ENCODE measurements at regions of chr14 and their contacts with region 1.

Region 1: GRCh38 chr14:35365130-35366055 is 39.2 kb downstream of the NFKBIA start:
- DNase-seq: peak in 1 of 10 donors; percentile 46
- ATAC-seq: peak in 1 of 2 donors; percentile 29
- H3K4me3 Mint-ChIP-seq: peak overlapping the region in 5 of 10 donors; percentile 18 to 47 (median 26)
- H3K27ac Mint-ChIP-seq: peak overlapping the region in 9 of 10 donors; percentile 21 to 95 (median 60)
- H3K4me1 Mint-ChIP-seq: peaks cover 19 to 51% (median 45%) of the 10 kb centered on the region in 4 donors
- H3K27me3 Mint-ChIP-seq: no peaks in the 10 kb centered on the region

Region 2: GRCh38 chr14:35277179-35277578 is 88.2 kb before region 1 on chr14:
- POLR2A ChIA-PET with region 1: no interaction called
- DNase-seq: no peak
- ATAC-seq: no peak
- H3K4me3 Mint-ChIP-seq: no peak overlapping the region
- H3K27ac Mint-ChIP-seq: peak overlapping the region in 1 of 10 donors; percentile 61
- H3K4me1 Mint-ChIP-seq: peaks cover 0 to 3% (median 0%) of the 10 kb centered on the region in 4 donors
- H3K27me3 Mint-ChIP-seq: no peaks in the 10 kb centered on the region

Region 3: DNA sequence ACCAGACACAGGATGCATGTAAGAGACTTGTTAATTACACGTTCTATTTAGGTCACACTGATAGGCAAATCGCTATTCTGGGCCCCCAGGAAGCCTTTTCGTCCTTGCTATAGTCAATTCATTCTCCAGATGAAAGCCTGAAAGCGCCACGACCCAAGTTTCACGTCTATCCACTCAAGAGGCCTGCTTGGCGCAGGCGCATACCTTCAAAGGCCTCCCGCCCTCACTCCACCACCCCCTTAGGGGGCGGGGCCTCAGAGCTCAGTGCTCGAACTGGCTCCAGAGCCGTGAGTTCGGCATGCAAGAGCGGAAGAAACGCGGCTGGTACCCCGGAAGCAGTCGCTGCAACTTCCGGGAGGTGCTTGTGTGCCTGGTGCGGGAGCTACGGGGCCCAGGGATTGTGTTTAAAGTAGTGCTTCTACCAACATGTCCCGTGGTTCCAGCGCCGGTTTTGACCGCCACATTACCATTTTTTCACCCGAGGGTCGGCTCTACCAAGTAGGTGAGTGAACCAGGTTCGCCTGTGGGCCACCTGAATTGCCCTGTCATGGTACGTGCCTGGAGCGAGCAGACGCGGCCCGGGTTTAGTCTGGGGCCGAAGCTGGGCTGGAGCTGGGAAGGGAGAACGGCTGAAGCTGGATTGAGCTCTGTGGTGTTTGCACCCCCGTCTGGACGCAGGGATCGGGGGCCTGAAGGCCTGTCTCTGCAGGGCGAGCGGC is 73.2 kb before region 1 on chr14 and contains the start of gene PSMA6:
- POLR2A ChIA-PET with region 1: interaction called, 37 read pairs
- DNase-seq: peak; percentile 94 to 100 (median 99)
- ATAC-seq: peak; percentile 93 to 94
- H3K4me3 Mint-ChIP-seq: peak within 1 kb of the TSS; percentile 95 to 98 (median 98)
- H3K27ac Mint-ChIP-seq: peak within 1 kb of the TSS; percentile 94 to 99 (median 98)
- H3K4me1 Mint-ChIP-seq: peaks cover 8 to 60% (median 46%) of the 10 kb centered on the region in 4 donors
- H3K27me3 Mint-ChIP-seq: no peaks in the 10 kb centered on the region
- polyA plus RNA-seq, gene PSMA6: 256 to 378 (median 273) TPM

Region 4: GRCh38 chr14:35301735-35302528 is 63.5 kb before region 1 on chr14:
- POLR2A ChIA-PET with region 1: interaction called, 10 read pairs
- DNase-seq: peak in 1 of 10 donors; percentile 10
- ATAC-seq: peak; percentile 52 to 75
- H3K4me3 Mint-ChIP-seq: peak overlapping the region; percentile 19 to 76 (median 60)
- H3K27ac Mint-ChIP-seq: peak overlapping the region; percentile 59 to 95 (median 86)
- H3K4me1 Mint-ChIP-seq: peaks cover 35 to 72% (median 62%) of the 10 kb centered on the region in 4 donors
- H3K27me3 Mint-ChIP-seq: no peaks in the 10 kb centered on the region

Region 5: GRCh38 chr14:35331605-35332516 is 33.5 kb before region 1 on chr14:
- POLR2A ChIA-PET with region 1: interaction called, 20 read pairs
- DNase-seq: no peak
- ATAC-seq: no peak
- H3K4me3 Mint-ChIP-seq: peak overlapping the region in 1 of 10 donors; percentile 37
- H3K27ac Mint-ChIP-seq: peak overlapping the region; percentile 89 to 96 (median 93)
- H3K4me1 Mint-ChIP-seq: peaks cover 16 to 38% (median 30%) of the 10 kb centered on the region in 4 donors
- H3K27me3 Mint-ChIP-seq: no peaks in the 10 kb centered on the region

Region 6: GRCh38 chr14:35341446-35342159 is 23.8 kb before region 1 on chr14:
- POLR2A ChIA-PET with region 1: interaction called, 16 read pairs
- DNase-seq: peak; percentile 29 to 88 (median 56)
- ATAC-seq: peak; percentile 99
- H3K4me3 Mint-ChIP-seq: peak overlapping the region in 7 of 10 donors; percentile 36 to 79 (median 66)
- H3K27ac Mint-ChIP-seq: peak overlapping the region in 8 of 10 donors; percentile 13 to 91 (median 74)
- H3K4me1 Mint-ChIP-seq: peaks cover 14 to 49% (median 38%) of the 10 kb centered on the region in 4 donors
- H3K27me3 Mint-ChIP-seq: no peaks in the 10 kb centered on the region

Region 7: DNA sequence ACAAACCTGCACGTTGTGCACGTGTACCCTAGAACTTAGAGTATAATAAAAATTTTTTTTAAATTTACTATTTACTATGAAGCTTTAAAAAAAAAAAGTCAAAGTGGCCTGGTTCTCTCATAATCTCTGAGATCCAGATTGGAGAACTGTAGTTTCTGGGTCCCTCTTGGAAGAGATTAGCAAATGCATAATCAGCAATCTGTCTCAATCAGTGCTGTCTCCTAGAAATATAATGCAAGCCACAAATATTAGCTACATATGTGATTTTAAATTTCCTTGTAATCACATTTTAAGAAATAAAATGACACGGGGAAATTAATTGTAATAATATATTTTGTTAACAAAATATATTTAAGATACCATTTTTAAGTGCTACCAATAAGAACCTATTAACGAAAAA is 411.4 kb after region 1 on chr14:
- POLR2A ChIA-PET with region 1: no interaction called
- DNase-seq: no peak
- ATAC-seq: no peak
- H3K4me3 Mint-ChIP-seq: no peak overlapping the region
- H3K27ac Mint-ChIP-seq: no peak overlapping the region
- H3K4me1 Mint-ChIP-seq: peaks cover 0 to 15% (median 8%) of the 10 kb centered on the region in 4 donors
- H3K27me3 Mint-ChIP-seq: no peaks in the 10 kb centered on the region

Measured in naive thymus-derived CD8-positive, alpha-beta T cell (primary cell).